ENCODE measurements at regions of chr18 and their contacts with region 1.

Region 1: DNA sequence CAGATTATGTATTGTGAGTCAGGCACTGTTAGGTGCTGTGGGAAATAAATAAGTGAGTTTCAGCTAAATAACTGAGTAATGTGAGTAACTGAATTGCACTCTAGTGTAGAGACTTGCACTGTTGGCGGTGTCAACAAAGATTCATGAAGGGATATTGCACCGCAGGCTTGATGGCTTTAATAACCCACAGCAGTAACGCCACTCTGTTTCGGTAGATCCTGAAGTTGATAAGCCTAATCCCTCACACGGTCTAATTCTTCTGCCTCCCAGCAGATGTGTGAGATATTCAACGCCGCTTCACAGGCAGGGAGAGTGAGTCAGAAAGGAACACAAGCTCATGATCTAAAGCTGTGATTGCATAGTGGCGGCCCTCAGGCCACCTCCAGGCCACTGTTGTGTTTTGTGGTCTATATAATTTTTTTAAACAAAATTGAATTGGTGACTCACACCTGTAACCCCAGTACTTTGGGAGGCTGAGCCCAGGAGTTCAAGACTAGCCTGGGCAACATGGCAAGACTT is 94.3 kb downstream of the LIPG start:
- DNase-seq: peak in 1 of 2 experiments; percentile 19
- H3K4me3 ChIP-seq: no peak overlapping the region
- H3K4me3 Mint-ChIP-seq: no peak overlapping the region
- H3K27ac Mint-ChIP-seq: no peak overlapping the region
- H3K4me1 ChIP-seq: peaks cover 27% of the 10 kb centered on the region
- H3K4me1 Mint-ChIP-seq: peaks cover 22% of the 10 kb centered on the region
- H3K27me3 ChIP-seq: no peaks in the 10 kb centered on the region
- H3K27me3 Mint-ChIP-seq: no peaks in the 10 kb centered on the region
- CTCF ChIP-seq: no peak

Region 2: DNA sequence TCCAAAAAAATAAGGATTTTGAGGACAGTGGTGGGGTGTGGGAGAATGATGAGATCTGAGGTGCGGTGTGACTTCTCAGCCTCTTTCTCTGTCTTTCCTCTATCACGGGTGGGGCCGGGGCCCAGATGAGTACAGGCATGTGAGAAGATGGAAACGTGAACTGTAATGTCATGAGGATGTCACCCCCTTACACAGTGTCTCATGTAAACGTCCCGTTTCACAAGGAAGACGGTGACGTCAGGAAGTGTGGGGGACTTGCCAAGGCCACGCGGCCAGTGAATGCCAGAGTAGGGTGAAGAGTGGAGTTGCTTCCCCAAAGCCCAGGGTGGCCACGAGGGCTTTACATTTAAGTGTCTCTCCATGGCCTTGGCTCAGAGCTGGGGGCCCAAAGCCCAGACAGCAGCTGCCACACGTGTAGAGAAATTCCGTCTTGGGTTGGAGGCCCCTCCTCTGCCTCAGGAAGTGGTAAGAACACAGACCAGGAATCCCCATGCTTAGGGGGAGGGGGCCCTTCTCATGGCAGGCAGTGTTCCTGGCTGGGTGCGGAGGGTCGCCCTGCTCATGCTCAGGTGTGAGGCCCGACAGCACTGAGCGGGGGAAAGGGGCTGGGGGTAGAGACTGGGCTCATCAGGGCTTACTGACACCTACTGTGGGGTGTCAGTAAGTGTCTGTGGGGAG is 624.5 kb before region 1 on chr18:
- CTCF ChIA-PET with region 1: no interaction called
- POLR2A ChIA-PET with region 1: no interaction called
- intact Hi-C with region 1: no loop called
- DNase-seq: no peak
- H3K4me3 ChIP-seq: no peak overlapping the region
- H3K4me3 Mint-ChIP-seq: no peak overlapping the region
- H3K27ac Mint-ChIP-seq: no peak overlapping the region
- H3K4me1 ChIP-seq: no peaks in the 10 kb centered on the region
- H3K4me1 Mint-ChIP-seq: no peaks in the 10 kb centered on the region
- H3K27me3 ChIP-seq: no peaks in the 10 kb centered on the region
- H3K27me3 Mint-ChIP-seq: no peaks in the 10 kb centered on the region
- CTCF ChIP-seq: no peak

Region 3: DNA sequence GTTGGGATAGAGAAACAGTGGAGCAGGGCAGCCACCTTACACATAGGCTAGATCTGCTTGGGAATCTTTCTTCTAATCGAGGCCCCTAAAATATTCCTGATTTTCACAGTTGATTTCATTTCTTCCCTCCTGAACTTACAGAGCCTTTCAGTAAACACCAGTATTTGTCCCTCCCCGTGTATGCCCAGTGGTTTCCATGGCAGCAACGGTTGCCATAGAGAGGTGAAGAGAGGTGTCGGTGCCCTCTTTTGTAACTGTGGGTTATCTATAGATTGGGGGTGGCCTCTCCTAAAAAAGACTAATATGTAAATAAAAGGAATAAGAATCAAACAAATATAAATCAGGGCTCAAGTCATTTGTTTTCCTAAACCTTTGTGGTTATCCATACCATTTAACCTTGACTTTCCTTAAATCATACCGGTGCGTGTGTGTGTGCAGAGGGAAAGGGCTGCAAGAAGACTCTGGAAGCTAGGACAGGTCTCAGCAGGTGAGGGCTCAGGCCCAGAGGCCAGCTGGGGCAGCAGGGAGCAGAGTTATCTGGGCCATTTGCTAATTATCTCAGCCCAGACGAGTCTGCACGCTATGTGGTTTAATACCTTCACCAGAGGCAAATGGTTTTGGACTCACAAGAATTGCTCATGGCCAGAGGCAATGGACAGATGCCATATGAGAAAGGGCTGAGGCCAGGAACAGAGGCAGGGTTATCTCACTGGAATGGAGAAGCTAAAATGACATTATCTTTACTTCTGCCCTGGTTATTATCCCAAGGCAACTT is 58.8 kb before region 1 on chr18:
- CTCF ChIA-PET with region 1: no interaction called
- POLR2A ChIA-PET with region 1: no interaction called
- intact Hi-C with region 1: loop called (anchors 10 kb)
- DNase-seq: peak; percentile 7 to 47
- H3K4me3 ChIP-seq: no peak overlapping the region
- H3K4me3 Mint-ChIP-seq: no peak overlapping the region
- H3K27ac Mint-ChIP-seq: no peak overlapping the region
- H3K4me1 ChIP-seq: peaks cover 4% of the 10 kb centered on the region; the same call in 1 of the 2 replicates
- H3K4me1 Mint-ChIP-seq: peaks cover 6% of the 10 kb centered on the region
- H3K27me3 ChIP-seq: no peaks in the 10 kb centered on the region
- H3K27me3 Mint-ChIP-seq: no peaks in the 10 kb centered on the region
- CTCF ChIP-seq: no peak

Region 4: DNA sequence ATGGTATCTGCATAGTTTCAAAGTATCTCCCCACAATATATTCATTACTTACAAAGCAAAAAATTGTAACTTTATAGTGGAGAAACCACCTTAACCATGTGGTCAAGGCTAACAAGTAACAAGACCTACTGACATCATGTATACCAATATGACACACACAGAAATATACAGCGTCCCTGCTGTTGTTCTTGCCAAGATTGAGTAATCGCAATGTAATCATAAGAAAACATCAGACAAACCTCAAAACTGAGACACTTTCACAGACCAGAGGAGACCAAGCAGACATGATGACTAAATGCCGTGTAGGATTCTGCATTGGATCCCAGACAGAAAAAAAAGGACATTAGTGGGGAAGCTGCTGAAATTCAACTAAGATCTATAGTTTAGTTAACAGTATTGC is 34.2 kb after region 1 on chr18:
- CTCF ChIA-PET with region 1: no interaction called
- POLR2A ChIA-PET with region 1: no interaction called
- intact Hi-C with region 1: loop called (anchors 5 kb)
- DNase-seq: no peak
- H3K4me3 ChIP-seq: no peak overlapping the region
- H3K4me3 Mint-ChIP-seq: no peak overlapping the region
- H3K27ac Mint-ChIP-seq: no peak overlapping the region
- H3K4me1 ChIP-seq: peaks cover 19% of the 10 kb centered on the region
- H3K4me1 Mint-ChIP-seq: peaks cover 20% of the 10 kb centered on the region
- H3K27me3 ChIP-seq: no peaks in the 10 kb centered on the region
- H3K27me3 Mint-ChIP-seq: no peaks in the 10 kb centered on the region
- CTCF ChIP-seq: no peak

Measured in Caco-2 (cell line).